Spleen (tissue), 13 donors: ENCODE measurements at regions of chr2 and their contacts with region 1.

Region 1: GRCh38 chr2:58448065-58448507 is 207.0 kb upstream of the FANCL start:
- DNase-seq: no peak
- H3K4me3 ChIP-seq: no peak overlapping the region
- H3K27ac ChIP-seq: no peak overlapping the region
- H3K4me1 ChIP-seq: no peaks in the 10 kb centered on the region
- H3K27me3 ChIP-seq: no peaks in the 10 kb centered on the region
- CTCF ChIP-seq: peak in 6 of 11 experiments; percentile 7 to 45 (median 33)
- POLR2A ChIP-seq: no peak

Region 2: DNA sequence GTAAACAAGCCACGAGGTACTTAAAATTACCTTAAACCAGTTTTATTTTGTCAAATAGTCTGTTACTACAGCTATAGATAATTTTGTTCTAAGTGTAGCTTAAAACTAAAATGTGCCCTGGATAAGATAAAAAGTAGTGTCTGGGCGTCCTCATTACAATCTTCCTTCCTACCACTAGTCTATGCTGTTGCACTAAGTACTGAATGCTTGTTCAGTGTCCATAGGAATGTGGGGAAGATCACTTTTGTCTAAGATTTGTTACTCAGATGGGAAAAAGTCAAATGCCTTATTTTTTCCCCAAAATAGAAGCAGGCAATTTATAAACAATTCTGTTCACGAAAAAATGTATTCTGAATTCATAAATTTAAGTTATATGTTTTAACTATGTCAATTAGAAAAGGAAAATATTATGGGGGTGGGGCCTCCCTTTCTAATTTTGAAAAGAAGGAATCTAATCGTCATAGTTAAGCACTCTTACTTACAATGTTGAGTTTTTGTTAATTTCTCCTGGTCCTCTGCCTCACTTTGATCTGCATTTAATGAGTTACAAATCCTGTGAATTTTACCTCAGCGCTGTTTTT is 541.8 kb before region 1 on chr2:
- intact Hi-C with region 1: loop called (anchors 10 kb)
- DNase-seq: no peak
- H3K4me3 ChIP-seq: no peak overlapping the region
- H3K27ac ChIP-seq: peak overlapping the region in 1 of 8 donors; percentile 68
- H3K4me1 ChIP-seq: peaks cover 3 to 39% (median 16%) of the 10 kb centered on the region in 6 donors
- H3K27me3 ChIP-seq: no peaks in the 10 kb centered on the region
- CTCF ChIP-seq: peak; percentile 41 to 79 (median 69)
- POLR2A ChIP-seq: no peak

Region 3: DNA sequence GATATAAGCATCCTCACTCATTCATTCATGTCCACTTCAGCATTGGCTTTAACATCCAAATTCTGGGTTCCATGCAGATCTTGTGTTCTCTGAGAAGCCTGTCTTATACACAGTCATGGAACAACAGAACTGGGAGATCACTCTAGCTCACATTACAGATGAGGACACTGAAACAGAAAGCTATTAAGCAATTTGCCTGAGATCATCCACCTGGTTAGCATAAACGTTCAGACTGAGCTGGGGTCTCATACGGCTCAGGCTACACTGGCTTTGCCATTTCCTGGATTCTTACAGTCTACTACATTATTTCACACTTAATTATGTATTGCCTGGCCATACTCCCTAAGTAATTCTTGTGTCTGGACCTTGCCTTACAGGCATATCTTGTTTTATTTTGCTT is 37.5 kb before region 1 on chr2:
- intact Hi-C with region 1: no loop called
- DNase-seq: no peak
- H3K4me3 ChIP-seq: no peak overlapping the region
- H3K27ac ChIP-seq: no peak overlapping the region
- H3K4me1 ChIP-seq: no peaks in the 10 kb centered on the region
- H3K27me3 ChIP-seq: peaks cover 0 to 5% (median 0%) of the 10 kb centered on the region in 7 donors
- CTCF ChIP-seq: no peak
- POLR2A ChIP-seq: no peak

Region 4: DNA sequence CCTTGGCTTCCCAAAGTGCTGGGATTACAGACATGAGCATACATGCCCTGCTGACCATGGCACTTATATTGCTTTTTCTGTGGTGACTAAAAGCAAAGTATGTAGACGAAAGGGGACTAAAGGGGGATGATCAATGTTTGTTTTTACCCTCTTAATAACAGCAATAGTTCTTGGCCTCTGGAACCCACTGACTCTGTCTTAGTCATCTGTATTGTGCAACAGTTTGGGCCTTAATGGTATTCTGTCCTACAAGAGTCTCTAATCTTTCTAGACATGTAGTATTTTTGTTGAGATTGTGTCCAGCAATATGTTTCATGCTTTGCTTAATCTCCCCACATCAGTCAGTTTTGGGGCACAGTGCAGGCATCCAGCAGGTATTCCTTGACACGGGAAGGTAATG is 152.9 kb after region 1 on chr2:
- intact Hi-C with region 1: no loop called
- DNase-seq: no peak
- H3K4me3 ChIP-seq: no peak overlapping the region
- H3K27ac ChIP-seq: no peak overlapping the region
- H3K4me1 ChIP-seq: no peaks in the 10 kb centered on the region
- H3K27me3 ChIP-seq: no peaks in the 10 kb centered on the region
- CTCF ChIP-seq: no peak
- POLR2A ChIP-seq: no peak